HEK293 (cell line): ENCODE measurements at regions of chr17 and their contacts with region 1.

Region 1: DNA sequence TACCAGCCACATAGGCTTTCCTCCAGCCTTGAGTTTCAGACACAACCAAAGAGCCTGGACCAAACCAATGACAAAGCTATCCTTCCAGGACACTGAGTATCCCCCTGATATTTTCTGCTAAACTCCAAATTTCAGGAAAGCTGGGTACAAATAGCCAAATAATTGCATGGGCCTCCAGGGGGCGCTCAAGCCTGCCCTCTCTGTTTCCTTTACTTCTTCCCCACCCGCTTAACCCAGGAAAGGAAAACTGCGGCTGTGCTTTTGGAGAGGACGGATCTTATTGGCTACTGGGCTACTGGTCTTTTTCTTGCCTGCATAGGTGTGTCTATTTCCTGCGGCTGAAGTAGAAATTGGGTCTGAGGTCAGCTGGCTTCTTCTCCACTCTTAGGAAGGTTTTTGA is 30.1 kb downstream of the GNGT2 start:
- H3K4me3 ChIP-seq: no peak overlapping the region
- H3K27ac ChIP-seq: no peak overlapping the region
- H3K4me1 ChIP-seq: no peaks in the 10 kb centered on the region
- CTCF ChIP-seq: no peak

Region 2: GRCh38 chr17:49170216-49170615 is 10.1 kb before region 1 on chr17:
- CTCF ChIA-PET with region 1: interaction called, 14 read pairs
- POLR2A ChIA-PET with region 1: no interaction called
- H3K4me3 ChIP-seq: no peak overlapping the region
- H3K27ac ChIP-seq: no peak overlapping the region
- H3K4me1 ChIP-seq: no peaks in the 10 kb centered on the region
- CTCF ChIP-seq: no peak

Region 3: DNA sequence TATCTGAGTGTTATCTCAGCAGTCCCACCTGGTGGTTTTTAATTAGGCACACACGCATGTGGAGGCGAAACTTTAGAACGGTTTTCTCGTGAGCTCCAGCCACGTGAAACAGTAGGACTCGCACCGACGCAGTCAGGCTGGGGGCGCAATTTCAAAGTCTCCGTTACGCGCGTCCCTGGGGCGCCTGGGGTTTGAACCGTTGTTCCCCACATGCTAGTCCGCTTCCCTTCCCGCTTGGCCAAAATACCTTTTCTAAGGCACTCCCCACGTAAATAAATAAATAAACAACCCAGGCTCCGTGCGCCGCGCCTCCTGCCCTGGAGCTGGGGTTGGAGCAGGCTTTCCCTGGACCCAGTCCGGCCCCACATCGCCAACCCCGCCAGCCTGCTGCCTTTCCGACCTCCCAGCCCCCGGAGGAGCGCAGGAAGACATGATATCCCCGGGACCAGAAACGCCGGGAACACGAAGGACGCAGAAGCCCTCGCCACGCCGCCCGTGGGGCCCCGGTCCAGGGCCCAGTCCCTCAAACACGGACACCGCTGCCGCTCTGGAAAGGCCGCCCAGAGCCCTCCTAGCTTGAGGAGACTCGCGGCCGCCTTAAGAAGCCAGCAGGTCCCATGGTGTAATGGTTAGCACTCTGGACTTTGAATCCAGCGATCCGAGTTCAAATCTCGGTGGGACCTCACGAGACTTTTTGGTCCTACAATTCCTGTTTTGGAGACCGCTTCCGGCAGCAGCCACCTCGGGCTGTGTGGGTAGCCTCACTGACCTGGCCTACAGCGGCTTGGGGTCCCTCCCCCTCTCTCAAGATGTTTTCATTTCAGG is 11.8 kb after region 1 on chr17:
- CTCF ChIA-PET with region 1: interaction called, 28 read pairs
- POLR2A ChIA-PET with region 1: no interaction called
- H3K4me3 ChIP-seq: peak overlapping the region; percentile 81
- H3K27ac ChIP-seq: peak overlapping the region; percentile 97
- H3K4me1 ChIP-seq: peaks cover 2% of the 10 kb centered on the region; the same call in 1 of the 2 replicates
- CTCF ChIP-seq: peak; percentile 92

Region 4: GRCh38 chr17:49290690-49291359 is 110.5 kb after region 1 on chr17:
- CTCF ChIA-PET with region 1: interaction called, 10 read pairs
- POLR2A ChIA-PET with region 1: no interaction called
- H3K4me3 ChIP-seq: no peak overlapping the region
- H3K27ac ChIP-seq: no peak overlapping the region
- H3K4me1 ChIP-seq: peaks cover 2% of the 10 kb centered on the region; the same call in 1 of the 2 replicates
- CTCF ChIP-seq: 0 out of 2 replicates have a peak, but pooled peaks have one; percentile 24

Region 5: GRCh38 chr17:50361561-50362480 is 1181.5 kb after region 1 on chr17:
- CTCF ChIA-PET with region 1: no interaction called
- POLR2A ChIA-PET with region 1: no interaction called
- H3K4me3 ChIP-seq: no peak overlapping the region
- H3K27ac ChIP-seq: no peak overlapping the region
- H3K4me1 ChIP-seq: 0 out of 2 replicates have a peak, but pooled peaks cover 5% of the 10 kb centered on the region
- CTCF ChIP-seq: peak; percentile 72